ENCODE measurements at regions of chr1 and their contacts with region 1.

Region 1: GRCh38 chr1:183877321-183877720 is 72.4 kb downstream of the RGL1 start:
- DNase-seq: peak; percentile 43 to 56
- ATAC-seq: peak in 6 of 8 donors; percentile 39 to 65 (median 56)
- H3K4me3 ChIP-seq: peak overlapping the region in 6 of 10 donors; percentile 8 to 32 (median 24)
- H3K27ac ChIP-seq: peak overlapping the region in 9 of 10 donors; percentile 28 to 85 (median 64)
- H3K4me1 ChIP-seq: peaks cover 24 to 99% (median 83%) of the 10 kb centered on the region in 9 donors
- H3K27me3 ChIP-seq: no peaks in the 10 kb centered on the region
- CTCF ChIP-seq: no peak

Region 2: GRCh38 chr1:182855911-182856310 is 1021.4 kb before region 1 on chr1:
- intact Hi-C with region 1: no loop called
- DNase-seq: no peak
- ATAC-seq: no peak
- H3K4me3 ChIP-seq: no peak overlapping the region
- H3K27ac ChIP-seq: no peak overlapping the region
- H3K4me1 ChIP-seq: peaks cover 0 to 15% (median 0%) of the 10 kb centered on the region in 9 donors
- H3K27me3 ChIP-seq: no peaks in the 10 kb centered on the region
- CTCF ChIP-seq: no peak

Region 3: GRCh38 chr1:183837062-183837461 is 40.3 kb before region 1 on chr1:
- intact Hi-C with region 1: loop called in 2 of 10 experiments (anchors 5 kb)
- DNase-seq: no peak
- ATAC-seq: peak in 3 of 8 donors; percentile 37 to 43 (median 41)
- H3K4me3 ChIP-seq: no peak overlapping the region
- H3K27ac ChIP-seq: no peak overlapping the region
- H3K4me1 ChIP-seq: peaks cover 0 to 59% (median 33%) of the 10 kb centered on the region in 9 donors
- H3K27me3 ChIP-seq: no peaks in the 10 kb centered on the region
- CTCF ChIP-seq: no peak

Region 4: DNA sequence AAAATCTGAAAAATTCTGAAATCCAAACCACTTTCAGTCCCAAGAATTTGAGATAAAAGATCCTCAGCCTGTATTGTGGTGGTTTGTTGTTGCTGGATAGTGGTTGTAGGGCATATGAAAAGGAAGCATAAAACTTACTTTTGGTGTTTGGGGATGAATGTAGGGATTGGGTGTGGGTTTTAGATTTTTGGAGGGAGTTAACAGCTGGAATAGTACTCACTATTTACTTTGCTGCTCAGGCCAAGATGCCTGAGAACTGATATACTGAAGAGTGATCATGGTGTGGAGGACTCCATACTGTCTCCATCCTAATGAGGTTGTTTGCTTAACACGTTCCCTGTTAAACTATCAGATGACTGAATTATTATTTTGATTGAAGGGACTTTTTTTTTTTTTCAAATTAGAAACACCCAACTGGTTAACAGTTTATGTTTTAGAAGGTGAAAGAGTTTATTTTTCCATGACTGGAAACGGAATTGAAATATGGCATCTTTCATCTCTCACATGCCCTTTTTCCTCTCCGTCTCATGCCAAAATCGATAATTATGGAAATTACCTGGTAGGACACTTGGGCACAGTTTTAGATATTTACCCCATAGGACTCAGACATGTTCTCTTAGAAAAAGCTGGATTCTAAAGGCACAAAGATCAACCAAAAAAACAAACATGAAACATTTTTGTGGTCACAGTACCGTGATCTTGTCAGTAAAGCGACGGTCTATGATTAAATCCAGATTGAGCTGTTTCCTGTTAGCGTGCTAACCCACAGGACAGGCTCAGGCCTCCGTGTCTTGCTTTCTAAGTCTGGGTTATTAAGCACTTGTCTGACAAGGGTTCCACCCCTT is 35.1 kb before region 1 on chr1:
- intact Hi-C with region 1: loop called in 2 of 10 experiments (anchors 5 kb)
- DNase-seq: peak in 1 of 2 donors; percentile 32
- ATAC-seq: peak; percentile 72 to 92 (median 84)
- H3K4me3 ChIP-seq: peak overlapping the region in 7 of 10 donors; percentile 2 to 27 (median 10)
- H3K27ac ChIP-seq: peak overlapping the region; percentile 34 to 84 (median 58)
- H3K4me1 ChIP-seq: peaks cover 3 to 66% (median 41%) of the 10 kb centered on the region in 9 donors
- H3K27me3 ChIP-seq: no peaks in the 10 kb centered on the region
- CTCF ChIP-seq: no peak

Measured in heart right ventricle (tissue), 16 donors.